ENCODE measurements at regions of chr1 and their contacts with region 1.

Region 1: GRCh38 chr1:152189657-152190442 is 30.8 kb upstream of the RPTN start:
- DNase-seq: no peak

Region 2: DNA sequence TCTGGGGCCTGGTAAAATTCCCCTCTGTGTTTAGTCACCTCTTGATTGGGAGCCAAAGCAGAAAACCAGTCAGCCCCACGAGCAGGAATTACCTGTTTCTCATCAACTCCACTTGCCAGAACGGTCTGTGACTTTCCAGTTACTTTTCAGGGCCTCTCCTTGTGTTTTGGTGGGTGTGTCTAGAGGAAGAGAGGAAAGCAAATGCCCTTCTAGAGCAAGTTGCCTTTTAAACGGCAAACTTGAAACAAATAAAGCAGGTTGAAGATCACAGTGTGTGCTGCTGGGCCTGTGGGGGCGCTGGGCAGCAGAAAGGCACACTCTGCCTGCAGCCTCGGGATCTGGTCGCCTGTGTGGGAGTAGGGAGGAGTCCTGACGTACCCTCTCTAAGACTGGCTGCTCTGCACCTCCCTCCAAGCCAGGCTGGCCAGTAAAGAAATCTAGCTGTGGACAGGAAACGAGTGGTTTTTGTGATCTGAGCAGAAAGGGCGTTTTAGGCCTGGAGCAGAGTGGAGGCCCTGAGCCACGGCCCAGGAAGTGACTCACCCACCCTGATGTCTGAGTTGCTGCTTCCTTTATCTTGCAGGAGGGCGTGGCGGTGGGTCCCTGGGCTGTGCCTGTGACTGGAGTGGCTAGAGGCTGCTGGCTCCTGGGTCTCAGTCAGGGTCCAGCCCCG is 142.0 kb before region 1 on chr1:
- intact Hi-C with region 1: loop called (anchors 2 kb)
- DNase-seq: peak; percentile 96

Region 3: GRCh38 chr1:152078831-152079441 is 110.9 kb before region 1 on chr1:
- intact Hi-C with region 1: no loop called
- DNase-seq: no peak

Region 4: DNA sequence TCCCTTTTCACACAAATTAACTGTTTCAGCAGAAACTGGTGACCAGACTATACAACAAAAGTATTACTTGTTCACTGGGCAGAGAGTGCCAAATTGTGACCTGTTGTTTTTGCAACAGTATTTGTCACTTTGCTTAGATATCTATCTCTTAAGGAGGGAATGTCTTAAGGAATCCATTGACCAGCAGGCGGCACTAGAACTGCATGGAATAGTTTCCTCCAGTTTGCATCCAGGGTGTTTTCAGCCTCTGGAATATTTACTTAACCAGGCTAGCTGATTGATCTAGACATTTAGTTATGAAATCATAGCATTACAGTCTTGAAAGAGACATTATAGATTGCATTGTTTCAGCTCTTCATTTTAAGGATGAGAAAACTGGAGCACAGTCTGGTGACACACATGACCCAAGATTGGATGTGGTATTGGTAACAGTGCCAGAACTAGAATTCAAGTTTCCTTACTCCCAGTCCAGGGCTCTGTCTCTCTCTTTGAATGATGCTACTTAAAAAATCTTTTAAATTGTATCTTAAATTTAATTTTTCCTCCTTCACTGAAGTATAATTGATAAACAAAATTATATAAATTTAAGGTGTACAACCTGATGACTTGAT is 47.8 kb before region 1 on chr1:
- intact Hi-C with region 1: loop called (anchors 2 kb)
- DNase-seq: no peak

Region 5: DNA sequence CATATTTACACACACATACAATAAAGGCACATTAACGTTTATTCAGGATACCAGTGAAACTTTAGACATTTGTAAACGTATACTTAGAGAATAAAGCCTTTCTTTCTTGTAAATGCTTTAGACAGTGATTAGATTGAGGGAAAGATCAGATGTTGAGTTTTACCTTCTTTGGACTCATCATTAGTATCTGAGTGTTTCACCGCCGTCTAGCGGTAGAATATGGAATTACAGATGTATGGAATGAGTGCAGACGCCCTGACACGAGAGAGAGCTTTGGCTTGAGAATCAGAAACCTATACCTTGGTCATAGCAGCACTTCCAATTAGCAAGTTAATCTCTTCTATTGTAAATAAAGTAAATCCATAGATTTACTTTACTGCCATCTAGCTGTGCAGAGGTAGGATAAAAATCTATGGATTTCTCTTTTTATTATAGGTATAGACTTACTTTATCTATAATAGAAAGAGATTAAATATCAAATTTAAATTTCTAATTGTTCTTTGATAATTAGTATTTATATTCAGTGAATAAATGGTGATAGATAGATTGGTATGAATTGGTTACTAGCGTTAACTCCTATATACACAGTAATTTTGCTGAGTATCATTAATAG is 157.4 kb after region 1 on chr1:
- intact Hi-C with region 1: loop called (anchors 5 kb)
- DNase-seq: no peak

Region 6: GRCh38 chr1:152440635-152441471 is 251.0 kb after region 1 on chr1:
- intact Hi-C with region 1: loop called (anchors 2 kb)
- DNase-seq: no peak

Region 7: DNA sequence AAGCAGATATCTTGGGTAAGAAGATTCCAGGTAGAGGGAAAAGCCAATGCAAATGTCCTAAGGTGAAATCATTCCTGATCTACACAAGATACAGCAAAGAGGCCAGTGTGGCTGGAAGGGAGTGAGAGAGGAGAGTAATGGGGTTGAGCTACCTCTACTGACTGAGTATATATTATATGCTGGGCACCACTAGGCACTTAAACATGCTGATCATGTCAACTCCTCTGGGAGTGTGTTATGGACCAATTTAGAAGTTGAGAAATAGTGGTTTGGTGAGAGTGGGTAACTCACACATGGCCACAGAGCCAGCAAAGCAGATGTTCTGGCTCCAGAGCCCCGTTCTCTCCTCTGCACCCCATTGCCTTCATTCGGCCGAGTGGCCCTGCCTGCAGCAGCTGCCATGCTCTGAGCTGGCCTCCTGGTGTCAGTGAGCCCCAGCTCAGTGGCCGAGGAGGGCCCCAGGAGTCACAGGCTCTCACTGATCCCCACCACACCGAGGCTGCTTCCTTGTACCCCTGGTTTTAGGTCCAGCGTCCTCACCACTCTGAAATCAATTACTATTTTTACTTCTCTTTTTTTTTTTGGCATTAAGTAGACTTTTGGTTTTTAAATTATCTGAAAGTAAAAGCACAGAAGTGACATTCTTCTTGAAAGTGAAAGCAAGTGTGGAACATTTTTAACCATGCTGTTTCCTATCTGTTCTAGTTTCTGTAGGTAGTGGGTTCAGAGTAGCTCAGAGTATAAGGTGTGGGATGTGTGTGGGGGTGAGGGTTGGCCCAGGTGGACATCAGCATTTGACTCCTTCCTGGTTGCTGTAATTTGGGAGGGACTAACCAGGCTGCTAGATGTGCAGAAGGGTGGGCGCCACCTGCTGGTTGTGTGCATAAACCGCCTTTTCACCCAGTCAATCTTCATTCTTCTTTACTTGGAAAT is 270.0 kb after region 1 on chr1:
- intact Hi-C with region 1: loop called (anchors 2 kb)
- DNase-seq: no peak

Region 8: GRCh38 chr1:152495066-152495675 is 305.3 kb after region 1 on chr1:
- intact Hi-C with region 1: no loop called
- DNase-seq: no peak